ENCODE measurements at regions of chr15 and their contacts with region 1.

Region 1: GRCh38 chr15:60362321-60363086 is 35.3 kb downstream of the ANXA2 start:
- DNase-seq: peak; percentile 41
- ATAC-seq: peak; percentile 80
- H3K4me3 Mint-ChIP-seq: no peak overlapping the region
- H3K27ac Mint-ChIP-seq: peak overlapping the region; percentile 35
- H3K4me1 Mint-ChIP-seq: peaks cover 26% of the 10 kb centered on the region
- H3K27me3 Mint-ChIP-seq: no peaks in the 10 kb centered on the region

Region 2: DNA sequence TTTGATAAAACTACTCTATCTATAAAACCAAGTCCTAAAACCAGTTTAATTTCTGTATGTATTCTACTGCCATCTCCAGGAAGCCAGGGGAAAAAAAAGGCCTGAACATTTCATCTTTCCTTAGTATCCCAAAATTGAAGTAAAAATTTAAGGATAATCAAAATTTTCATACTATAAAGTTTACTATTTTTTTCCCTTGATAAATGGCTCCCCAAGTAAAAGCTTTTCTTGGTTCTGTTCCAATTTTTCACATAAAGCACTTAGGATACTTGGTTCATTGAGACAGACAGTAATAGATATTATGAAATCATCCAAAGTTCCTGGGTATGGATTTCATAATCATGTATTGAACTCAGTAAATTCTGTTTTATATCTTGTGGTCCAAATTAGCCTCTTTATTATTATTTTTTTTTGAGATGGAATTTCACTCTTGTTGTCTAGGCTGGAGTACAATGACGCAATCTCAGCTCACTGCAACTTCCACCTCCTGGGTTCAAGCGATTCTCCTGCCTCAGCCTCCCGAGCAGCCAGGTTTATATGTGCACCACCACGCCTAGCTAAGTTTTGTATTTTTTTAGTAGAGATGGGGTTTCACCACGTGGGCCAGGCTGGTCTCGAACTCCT is 81.9 kb after region 1 on chr15:
- CTCF ChIA-PET with region 1: interaction called, 12 read pairs
- POLR2A ChIA-PET with region 1: no interaction called
- DNase-seq: no peak
- ATAC-seq: no peak
- H3K4me3 Mint-ChIP-seq: no peak overlapping the region
- H3K27ac Mint-ChIP-seq: no peak overlapping the region
- H3K4me1 Mint-ChIP-seq: peaks cover 8% of the 10 kb centered on the region
- H3K27me3 Mint-ChIP-seq: no peaks in the 10 kb centered on the region

Measured in activated CD8-positive, alpha-beta T cell treated with anti-CD3 and anti-CD28 coated beads, Interleukin-2, amount 10 ng/mL, durations not matched to agents 7 days and 5 days (primary cell).